Activated CD4-positive, alpha-beta memory T cell treated with anti-CD3 and anti-CD28 coated beads, Interleukin-2, amount 10 ng/mL, durations not matched to agents 7 days and 5 days (primary cell): ENCODE measurements at regions of chr6 and their contacts with region 1.

Region 1: DNA sequence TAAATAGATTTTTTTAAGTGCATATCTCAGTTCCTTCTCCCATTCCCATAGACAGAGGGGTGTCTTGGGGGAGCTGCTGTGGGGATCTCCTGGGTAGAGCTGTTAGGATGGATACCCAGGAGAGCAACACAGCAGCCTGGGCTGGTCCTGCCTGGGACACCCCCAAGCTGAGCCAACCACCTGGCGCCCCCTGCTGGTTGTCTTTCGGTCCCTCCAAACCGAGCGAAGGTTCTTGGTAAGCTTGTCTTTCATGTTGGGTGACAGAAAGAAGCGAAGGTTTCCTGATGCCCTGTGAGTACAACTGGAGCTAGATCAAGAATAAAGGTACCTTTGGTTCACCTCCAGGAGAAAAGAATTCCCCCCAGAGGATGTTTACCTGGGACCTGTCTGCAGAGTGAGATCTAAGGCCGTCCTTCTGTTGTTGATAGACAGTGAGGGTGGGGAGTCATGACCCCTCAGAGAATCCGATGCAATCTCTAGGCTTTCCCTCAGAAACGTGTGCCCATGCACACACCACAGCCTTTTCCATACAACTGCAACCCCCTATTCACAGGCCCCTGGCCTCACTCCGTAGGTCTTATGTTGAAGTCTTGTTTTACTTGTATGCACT is 50.8 kb downstream of the SNX9 start:
- DNase-seq: peak; percentile 87
- H3K4me3 Mint-ChIP-seq: no peak overlapping the region
- H3K27ac Mint-ChIP-seq: no peak overlapping the region
- H3K4me1 Mint-ChIP-seq: peaks cover 18% of the 10 kb centered on the region
- H3K27me3 Mint-ChIP-seq: no peaks in the 10 kb centered on the region

Region 2: DNA sequence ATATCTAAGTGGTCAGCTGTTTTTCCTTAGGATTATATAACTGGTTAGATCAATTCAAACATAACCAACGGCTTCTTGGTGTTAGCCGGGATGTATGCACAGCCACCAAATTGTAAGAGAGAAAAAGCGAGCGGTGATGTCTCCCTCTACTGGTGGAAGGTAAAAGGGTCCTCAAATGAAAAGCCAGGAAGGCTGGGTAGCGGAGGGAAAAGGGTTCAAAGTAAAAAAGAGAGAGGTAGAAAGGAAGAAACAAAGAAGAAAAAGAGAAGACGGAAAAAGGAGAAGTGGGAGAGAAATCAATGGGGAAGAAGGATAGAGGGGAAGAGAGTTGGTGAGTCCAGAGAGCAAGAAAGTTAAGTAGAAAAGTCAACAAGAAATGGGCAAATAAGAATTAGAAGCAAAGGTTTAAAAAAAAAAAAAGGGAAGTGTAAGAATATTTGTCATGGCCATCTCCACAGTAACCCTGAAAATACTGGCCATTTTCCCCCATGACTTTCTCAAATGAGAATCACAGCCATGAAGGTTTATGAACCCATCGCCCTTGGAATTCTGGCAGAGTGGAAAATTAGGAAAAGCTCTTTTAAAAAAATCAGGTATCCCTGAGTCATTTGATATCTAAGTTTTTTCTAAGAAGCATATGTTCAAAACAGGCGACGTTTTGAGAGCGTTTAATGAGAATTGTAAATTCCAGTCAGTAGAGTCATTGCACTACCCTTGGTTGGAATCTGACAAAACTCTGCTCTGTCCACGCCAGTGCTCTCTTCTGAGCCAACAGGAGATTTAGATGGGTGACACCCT is 206.4 kb before region 1 on chr6:
- CTCF ChIA-PET with region 1: interaction called, 12 read pairs
- POLR2A ChIA-PET with region 1: no interaction called
- DNase-seq: peak; percentile 60
- H3K4me3 Mint-ChIP-seq: no peak overlapping the region
- H3K27ac Mint-ChIP-seq: no peak overlapping the region
- H3K4me1 Mint-ChIP-seq: peaks cover 5% of the 10 kb centered on the region
- H3K27me3 Mint-ChIP-seq: peaks cover 4% of the 10 kb centered on the region

Region 3: GRCh38 chr6:157764178-157765033 is 109.4 kb before region 1 on chr6:
- CTCF ChIA-PET with region 1: interaction called, 158 read pairs
- POLR2A ChIA-PET with region 1: interaction called, 14 read pairs
- DNase-seq: peak; percentile 84
- H3K4me3 Mint-ChIP-seq: peak overlapping the region; percentile 49
- H3K27ac Mint-ChIP-seq: peak overlapping the region; percentile 82
- H3K4me1 Mint-ChIP-seq: peaks cover 73% of the 10 kb centered on the region
- H3K27me3 Mint-ChIP-seq: peaks cover 18% of the 10 kb centered on the region

Region 4: DNA sequence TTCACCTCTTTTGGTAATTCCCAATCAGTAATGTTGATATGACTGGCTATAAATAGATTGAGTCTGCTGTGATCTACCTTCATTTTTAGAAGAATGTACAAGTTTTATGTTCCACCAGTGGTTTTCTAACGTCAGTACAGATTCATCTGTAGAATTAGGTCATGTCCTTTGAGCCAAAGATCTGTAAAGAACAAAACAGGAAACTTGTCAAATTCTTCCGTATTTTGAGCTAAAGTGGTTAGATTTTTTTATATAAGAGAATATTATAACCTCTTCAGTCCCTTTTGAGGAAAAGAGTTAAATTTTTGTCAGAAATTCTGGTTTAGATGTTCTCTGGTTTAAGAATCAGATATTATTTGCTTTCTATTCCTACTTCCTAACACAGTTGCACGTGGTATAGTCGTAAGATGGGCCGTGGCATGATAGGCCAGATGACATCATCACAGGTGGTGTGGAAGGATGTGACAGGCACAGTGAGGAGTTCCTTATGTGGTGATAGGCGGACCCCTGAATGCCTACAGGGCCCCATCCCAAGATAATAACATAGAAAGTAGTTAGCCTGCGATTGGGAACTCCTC is 11.5 kb after region 1 on chr6:
- CTCF ChIA-PET with region 1: interaction called, 28 read pairs
- POLR2A ChIA-PET with region 1: interaction called, 4 read pairs
- DNase-seq: peak; percentile 68
- H3K4me3 Mint-ChIP-seq: peak overlapping the region; percentile 2
- H3K27ac Mint-ChIP-seq: peak overlapping the region; percentile 77
- H3K4me1 Mint-ChIP-seq: peaks cover 56% of the 10 kb centered on the region
- H3K27me3 Mint-ChIP-seq: no peaks in the 10 kb centered on the region

Region 5: GRCh38 chr6:157893238-157893637 is 19.4 kb after region 1 on chr6:
- CTCF ChIA-PET with region 1: interaction called, 17 read pairs
- POLR2A ChIA-PET with region 1: interaction called, 3 read pairs
- DNase-seq: no peak
- H3K4me3 Mint-ChIP-seq: no peak overlapping the region
- H3K27ac Mint-ChIP-seq: no peak overlapping the region
- H3K4me1 Mint-ChIP-seq: peaks cover 41% of the 10 kb centered on the region
- H3K27me3 Mint-ChIP-seq: no peaks in the 10 kb centered on the region

Region 6: DNA sequence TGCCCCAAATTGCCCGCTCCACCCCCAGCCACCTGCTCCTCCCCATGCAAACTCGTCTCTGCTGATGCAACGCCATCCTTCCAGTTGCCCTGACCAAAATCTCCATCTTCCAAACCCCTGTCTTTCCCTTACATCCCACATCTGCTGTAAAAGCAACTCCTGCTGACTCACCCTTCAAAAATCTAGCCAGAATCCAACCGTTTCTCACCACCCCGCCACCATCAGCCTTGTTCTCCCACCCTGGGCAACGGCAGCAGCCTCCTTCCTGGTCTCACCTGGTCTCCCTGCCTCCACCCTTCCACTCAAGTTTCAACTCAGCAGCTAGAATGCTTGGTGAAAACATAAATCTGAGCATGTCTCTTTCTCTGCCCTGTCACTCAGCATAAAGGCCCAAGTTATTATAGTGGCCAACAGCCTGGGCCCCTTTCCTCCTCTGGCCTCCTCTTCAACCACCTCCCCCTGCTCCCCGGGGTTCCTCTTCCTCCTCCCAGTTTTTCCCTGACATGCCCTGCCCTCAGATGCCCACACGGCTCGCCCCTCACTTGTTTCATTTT is 100.6 kb after region 1 on chr6:
- CTCF ChIA-PET with region 1: no interaction called
- POLR2A ChIA-PET with region 1: no interaction called
- DNase-seq: no peak
- H3K4me3 Mint-ChIP-seq: no peak overlapping the region
- H3K27ac Mint-ChIP-seq: no peak overlapping the region
- H3K4me1 Mint-ChIP-seq: peaks cover 3% of the 10 kb centered on the region
- H3K27me3 Mint-ChIP-seq: peaks cover 24% of the 10 kb centered on the region